Posterior cingulate gyrus (tissue), 11 donors: ENCODE measurements at regions of chr2 and their contacts with region 1.

Region 1: DNA sequence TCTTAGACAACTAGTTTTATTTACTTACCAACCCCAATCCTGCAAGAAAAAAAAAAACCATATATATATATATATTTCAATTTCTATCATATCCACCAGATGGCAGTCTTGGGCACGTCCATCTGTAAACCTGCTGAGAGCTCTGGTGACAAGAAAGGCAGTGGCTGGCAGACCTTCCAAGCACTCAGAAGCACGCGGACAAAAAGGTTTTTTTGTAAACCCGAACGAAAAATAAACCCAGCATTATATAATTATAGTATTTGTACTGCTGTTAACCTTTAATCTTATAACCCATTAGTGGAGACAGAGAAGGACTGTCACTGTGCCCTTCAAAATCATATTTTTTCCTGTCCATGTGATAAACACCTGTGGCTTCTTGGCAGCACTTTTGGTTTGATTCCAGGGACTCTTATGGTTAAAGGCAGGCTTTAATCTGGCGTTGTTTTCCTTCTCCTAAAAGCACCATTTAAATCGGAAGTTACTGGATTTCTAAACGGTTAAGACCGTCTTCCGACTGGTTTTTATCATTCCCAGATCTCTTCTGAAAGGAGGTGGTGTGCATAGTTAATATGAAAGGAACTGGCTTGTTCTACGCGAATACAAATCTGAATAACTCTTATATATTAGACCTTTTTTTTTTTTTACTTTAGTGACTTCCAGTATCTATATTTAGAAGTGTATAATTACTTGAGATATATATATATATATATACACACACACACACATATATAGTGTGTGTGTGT is 31.0 kb upstream of the SLC3A1 start:
- DNase-seq: peak in 8 of 10 donors; percentile 27 to 91 (median 56)

Region 2: DNA sequence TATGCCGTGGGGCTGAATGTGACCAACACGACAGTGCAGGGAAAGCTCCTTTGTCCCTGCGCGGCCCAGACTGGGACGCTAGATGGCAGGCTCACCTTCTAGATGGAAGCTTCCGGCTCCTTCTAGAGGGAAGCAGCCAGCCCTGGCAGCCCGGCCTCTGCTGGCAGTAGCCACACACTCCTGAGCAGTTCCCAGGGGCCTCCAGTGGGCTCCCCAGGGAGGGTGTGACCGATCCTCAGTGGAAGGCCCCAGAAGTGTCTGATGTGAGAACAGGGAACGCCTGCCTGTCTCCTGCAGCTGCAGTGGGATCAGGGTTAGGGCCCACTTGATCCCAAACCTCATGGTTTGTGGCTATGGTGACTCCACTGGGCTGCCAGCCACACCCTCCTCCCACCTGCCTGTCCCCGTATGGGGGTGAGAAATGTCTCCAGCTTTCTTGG is 200.0 kb before region 1 on chr2:
- intact Hi-C with region 1: loop called (anchors 2 kb)
- DNase-seq: peak; percentile 75 to 99 (median 90)

Region 3: DNA sequence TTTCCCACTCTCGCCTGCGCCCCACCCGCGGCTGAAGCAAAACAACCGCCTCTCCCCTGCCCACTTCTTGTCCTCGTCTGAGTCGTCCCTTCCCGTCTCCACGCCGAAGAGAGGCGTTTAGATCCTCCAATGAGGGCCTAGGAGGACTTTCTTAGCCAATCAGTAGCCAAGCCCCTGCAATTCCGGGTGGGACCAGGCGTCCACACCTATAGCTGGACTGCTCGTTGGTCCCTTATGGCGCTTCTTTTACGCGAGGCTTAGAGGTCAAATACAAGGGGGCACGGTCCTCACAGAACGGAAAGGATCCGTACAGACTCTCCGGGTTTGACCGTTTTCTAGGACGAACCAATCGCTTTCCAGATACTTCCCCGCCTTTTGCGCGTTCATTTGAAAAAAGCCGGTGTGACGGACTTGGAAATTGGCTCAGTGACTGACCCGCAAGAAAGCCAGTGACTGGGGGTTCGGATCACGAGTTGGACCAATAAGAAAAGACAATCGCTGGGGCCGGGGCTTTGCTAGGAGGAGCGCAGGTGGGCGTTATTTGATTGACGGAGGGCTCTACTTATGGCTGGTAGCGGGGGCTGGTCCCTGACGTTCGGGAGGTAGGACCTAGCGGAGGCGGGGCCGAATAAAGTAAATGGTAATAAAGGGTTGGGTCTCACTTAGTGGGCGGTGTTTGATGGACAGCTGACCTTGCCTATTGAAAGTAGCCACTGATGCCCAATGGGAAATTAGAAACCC is 76.2 kb before region 1 on chr2:
- intact Hi-C with region 1: loop called (anchors 2 kb)
- DNase-seq: peak; percentile 97 to 100 (median 98)

Region 4: GRCh38 chr2:44291281-44292248 is 47.3 kb after region 1 on chr2:
- intact Hi-C with region 1: loop called (anchors 2 kb)
- DNase-seq: peak in 7 of 10 donors; percentile 39 to 93 (median 55)

Region 5: DNA sequence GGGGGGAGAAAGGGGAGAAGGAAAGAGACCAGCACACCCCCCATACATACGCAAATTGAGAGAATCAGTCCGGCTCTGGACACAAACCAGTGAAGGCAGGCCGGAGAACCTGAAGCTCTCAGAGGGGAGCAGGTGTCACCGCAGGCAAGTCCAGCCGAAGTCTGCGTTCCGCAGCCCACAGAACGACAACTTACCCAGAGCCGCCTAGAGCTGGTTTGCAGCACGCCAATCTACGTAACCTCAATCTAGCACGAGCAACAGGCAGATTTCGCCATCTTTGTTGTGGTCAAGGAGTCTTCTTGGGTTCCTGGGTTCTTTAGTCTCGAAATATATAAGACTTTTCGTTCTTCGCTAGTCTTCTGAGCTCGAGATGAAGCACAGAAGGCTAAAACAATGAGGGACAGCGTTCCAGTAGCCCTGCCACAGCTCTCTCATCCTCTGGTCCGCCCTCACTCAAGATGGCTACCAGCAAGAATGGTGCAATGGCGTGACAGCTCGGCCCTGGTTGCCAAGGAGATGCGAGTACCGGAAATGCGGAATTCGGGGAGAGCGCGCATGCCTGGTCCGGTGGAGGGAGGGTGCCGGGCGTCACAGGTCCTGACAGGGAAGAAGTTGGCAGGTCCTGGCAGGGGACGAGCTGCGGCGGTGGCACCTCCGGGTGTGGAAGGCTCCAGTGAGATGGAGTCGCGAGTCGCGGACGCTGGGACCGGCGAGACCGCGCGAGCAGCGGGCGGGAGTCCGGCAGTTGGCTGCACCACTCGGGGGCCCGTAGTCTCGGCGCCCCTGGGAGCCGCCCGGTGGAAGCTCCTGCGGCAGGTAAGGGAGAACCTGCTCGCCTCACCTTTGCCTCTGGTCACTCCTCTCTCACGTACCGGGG is 117.3 kb after region 1 on chr2 and contains the starts of genes CAMKMT and PREPL:
- intact Hi-C with region 1: loop called (anchors 10 kb)
- DNase-seq: peak; percentile 94 to 99 (median 98)